MCF 10A (cell line): ENCODE measurements at regions of chr4 and their contacts with region 1.

Region 1: GRCh38 chr4:125314676-125315575 is at the start of gene FAT4:
- DNase-seq: peak; percentile 95
- H3K4me3 Mint-ChIP-seq: peak within 1 kb of the TSS; percentile 99
- H3K27ac Mint-ChIP-seq: peak within 1 kb of the TSS; percentile 63
- H3K4me1 Mint-ChIP-seq: peaks cover 18% of the 10 kb centered on the region
- H3K27me3 Mint-ChIP-seq: no peaks in the 10 kb centered on the region
- CTCF ChIP-seq: no peak
- total RNA-seq, gene FAT4: 6.4 and 6.6 TPM in 2 replicates

Region 2: DNA sequence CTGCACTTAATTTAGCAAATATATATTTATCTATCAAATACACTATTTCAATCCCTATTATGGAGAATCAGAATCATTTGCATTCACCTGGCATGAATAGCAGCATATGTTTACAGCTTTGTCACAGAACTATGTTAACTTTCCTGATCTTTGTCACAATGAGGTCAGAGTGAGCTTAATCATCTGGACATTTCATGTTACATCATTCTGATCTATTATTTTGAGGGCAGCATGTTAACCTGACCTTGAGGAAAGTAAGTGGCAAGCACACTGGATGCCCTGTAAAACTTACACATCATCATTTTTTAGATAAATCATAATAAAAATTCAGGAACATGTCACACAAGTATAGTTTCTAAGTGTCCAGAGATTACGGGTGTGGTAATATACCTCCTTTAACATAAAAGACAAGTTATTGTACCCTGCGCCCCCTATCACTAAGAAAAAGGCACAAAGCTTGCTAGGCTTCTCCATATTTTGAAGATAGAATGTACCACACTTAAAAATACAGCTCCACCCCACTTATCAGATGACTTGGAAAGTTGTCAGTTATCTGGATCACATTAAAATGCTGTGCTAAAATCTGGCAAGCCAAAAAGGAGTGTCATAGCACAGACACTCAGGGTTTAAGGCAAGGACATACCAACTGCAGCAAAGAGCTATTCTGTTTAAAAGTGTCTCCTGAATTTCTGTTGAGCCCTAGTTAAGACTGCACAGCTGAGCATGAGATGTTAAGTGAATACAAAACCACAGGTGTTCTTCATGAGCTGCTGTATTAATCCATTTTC is 182.8 kb before region 1 on chr4:
- CTCF ChIA-PET with region 1: no interaction called
- POLR2A ChIA-PET with region 1: no interaction called
- intact Hi-C with region 1: no loop called
- DNase-seq: no peak
- H3K4me3 Mint-ChIP-seq: no peak overlapping the region
- H3K27ac Mint-ChIP-seq: no peak overlapping the region
- H3K4me1 Mint-ChIP-seq: no peaks in the 10 kb centered on the region
- H3K27me3 Mint-ChIP-seq: no peaks in the 10 kb centered on the region
- CTCF ChIP-seq: no peak

Region 3: DNA sequence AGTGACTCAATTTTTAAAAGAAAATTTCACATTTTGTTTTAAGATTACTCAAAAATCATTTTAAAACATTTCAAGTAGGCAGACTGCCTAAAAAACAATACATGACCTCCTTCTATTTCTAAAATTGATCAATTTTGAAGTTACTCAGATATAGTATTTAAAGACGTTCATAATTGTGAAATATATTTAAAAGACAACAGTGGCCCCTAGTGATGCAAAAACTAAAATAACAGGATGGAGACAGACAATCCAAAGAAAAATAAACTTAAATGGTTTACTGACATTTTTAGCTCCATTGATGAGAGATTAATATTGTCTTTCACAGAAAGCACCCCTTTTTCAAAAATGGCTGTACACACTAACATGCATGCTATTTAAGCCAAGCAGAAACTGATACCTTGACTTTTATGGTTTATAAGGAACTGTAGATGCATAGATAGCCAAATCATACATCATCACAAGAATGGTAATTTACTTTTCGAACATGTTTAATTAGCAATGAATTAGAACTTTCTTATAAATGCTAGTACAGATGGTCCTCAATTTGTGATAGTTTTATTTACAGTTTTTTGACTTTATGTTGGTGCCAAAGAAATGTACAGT is 70.0 kb before region 1 on chr4:
- CTCF ChIA-PET with region 1: no interaction called
- POLR2A ChIA-PET with region 1: no interaction called
- intact Hi-C with region 1: no loop called
- DNase-seq: peak; percentile 27
- H3K4me3 Mint-ChIP-seq: no peak overlapping the region
- H3K27ac Mint-ChIP-seq: no peak overlapping the region
- H3K4me1 Mint-ChIP-seq: peaks cover 5% of the 10 kb centered on the region
- H3K27me3 Mint-ChIP-seq: no peaks in the 10 kb centered on the region
- CTCF ChIP-seq: peak; percentile 44

Region 4: DNA sequence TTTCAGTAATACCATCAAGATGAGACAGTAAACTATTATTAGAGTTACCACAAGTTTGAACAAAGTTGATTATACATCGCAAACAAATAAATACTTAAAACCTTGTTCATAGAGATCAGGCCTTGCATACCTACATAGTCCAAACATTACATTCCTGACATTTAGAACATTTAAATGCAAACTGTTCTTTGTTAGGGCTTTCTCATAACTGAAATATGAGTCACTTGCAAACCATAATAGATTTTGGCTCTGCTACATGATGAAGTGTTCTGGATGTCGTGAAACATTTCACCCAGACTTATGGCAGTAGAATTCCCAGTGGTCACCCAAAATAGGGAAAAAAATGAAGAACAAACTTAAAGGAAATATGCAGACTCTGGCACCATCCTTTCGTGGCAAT is 74.8 kb after region 1 on chr4:
- CTCF ChIA-PET with region 1: interaction called, 7 read pairs
- POLR2A ChIA-PET with region 1: interaction called, 24 read pairs
- intact Hi-C with region 1: loop called (anchors 1 kb)
- DNase-seq: peak; percentile 76
- H3K4me3 Mint-ChIP-seq: peak overlapping the region; percentile 60
- H3K27ac Mint-ChIP-seq: peak overlapping the region; percentile 87
- H3K4me1 Mint-ChIP-seq: peaks cover 33% of the 10 kb centered on the region
- H3K27me3 Mint-ChIP-seq: no peaks in the 10 kb centered on the region
- CTCF ChIP-seq: no peak

Region 5: GRCh38 chr4:125728568-125728967 is 413.6 kb after region 1 on chr4:
- CTCF ChIA-PET with region 1: interaction called, 24 read pairs
- POLR2A ChIA-PET with region 1: interaction called, 41 read pairs
- intact Hi-C with region 1: no loop called
- DNase-seq: peak; percentile 90
- H3K4me3 Mint-ChIP-seq: no peak overlapping the region
- H3K27ac Mint-ChIP-seq: peak overlapping the region; percentile 93
- H3K4me1 Mint-ChIP-seq: peaks cover 38% of the 10 kb centered on the region
- H3K27me3 Mint-ChIP-seq: no peaks in the 10 kb centered on the region
- CTCF ChIP-seq: no peak

Region 6: GRCh38 chr4:125741825-125742452 is 427.0 kb after region 1 on chr4:
- CTCF ChIA-PET with region 1: interaction called, 39 read pairs
- POLR2A ChIA-PET with region 1: interaction called, 41 read pairs
- intact Hi-C with region 1: loop called (anchors 1 kb)
- DNase-seq: peak; percentile 50
- H3K4me3 Mint-ChIP-seq: no peak overlapping the region
- H3K27ac Mint-ChIP-seq: no peak overlapping the region
- H3K4me1 Mint-ChIP-seq: peaks cover 7% of the 10 kb centered on the region
- H3K27me3 Mint-ChIP-seq: no peaks in the 10 kb centered on the region
- CTCF ChIP-seq: peak; percentile 62

Region 7: DNA sequence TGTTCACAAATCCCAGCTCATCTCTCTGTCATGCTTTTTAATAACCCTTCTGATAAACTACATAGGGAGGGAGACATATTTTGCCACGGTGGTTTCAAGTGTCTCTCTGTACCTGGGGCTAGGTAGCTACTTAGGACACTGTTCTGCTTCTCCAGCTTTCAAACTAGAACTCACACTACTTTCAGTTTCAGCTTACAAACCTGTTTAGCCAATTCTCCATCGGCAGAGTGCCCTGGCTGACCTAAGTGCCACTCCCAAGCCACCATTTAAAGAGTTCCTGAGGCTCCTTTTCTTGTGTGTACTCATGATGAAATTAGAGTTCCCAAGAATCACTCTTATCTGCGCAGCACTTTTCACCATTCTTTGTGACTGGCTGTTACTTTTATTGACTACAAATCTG is 899.1 kb after region 1 on chr4:
- CTCF ChIA-PET with region 1: interaction called, 3 read pairs
- POLR2A ChIA-PET with region 1: no interaction called
- intact Hi-C with region 1: loop called (anchors 10 kb)
- DNase-seq: peak; percentile 14
- H3K4me3 Mint-ChIP-seq: peak overlapping the region; percentile 28
- H3K27ac Mint-ChIP-seq: no peak overlapping the region
- H3K4me1 Mint-ChIP-seq: peaks cover 8% of the 10 kb centered on the region
- H3K27me3 Mint-ChIP-seq: no peaks in the 10 kb centered on the region
- CTCF ChIP-seq: no peak

Region 8: DNA sequence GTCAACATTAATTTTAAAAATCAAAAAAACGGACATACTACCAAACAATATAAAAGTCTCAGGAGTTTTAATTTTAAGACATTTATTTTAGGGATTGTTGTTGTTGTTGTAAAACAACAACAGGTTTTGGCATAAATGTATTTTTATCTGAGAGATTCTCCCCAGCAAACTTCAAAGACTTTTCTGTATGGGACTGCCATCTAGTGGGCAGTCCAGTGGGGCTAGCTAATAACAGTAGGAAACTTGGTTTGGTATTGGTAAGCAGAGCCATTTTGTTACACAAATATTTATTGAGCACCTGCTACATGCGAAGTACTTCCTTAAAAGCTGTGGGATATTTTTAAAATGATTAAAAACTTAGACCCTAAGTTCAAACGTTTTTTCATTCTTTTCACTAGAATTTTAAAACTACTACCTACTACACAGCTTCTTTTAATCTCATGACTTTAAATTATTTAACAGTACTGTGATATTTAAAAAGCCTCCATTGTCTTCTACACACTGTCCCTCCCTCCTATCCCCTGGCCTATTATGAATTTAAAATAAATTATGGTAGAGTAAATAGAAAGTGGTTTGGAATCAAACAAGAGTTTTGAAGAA is 1289.4 kb after region 1 on chr4:
- CTCF ChIA-PET with region 1: interaction called, 18 read pairs
- POLR2A ChIA-PET with region 1: interaction called, 3 read pairs
- intact Hi-C with region 1: loop called (anchors 1 kb)
- DNase-seq: peak; percentile 55
- H3K4me3 Mint-ChIP-seq: no peak overlapping the region
- H3K27ac Mint-ChIP-seq: no peak overlapping the region
- H3K4me1 Mint-ChIP-seq: no peaks in the 10 kb centered on the region
- H3K27me3 Mint-ChIP-seq: no peaks in the 10 kb centered on the region
- CTCF ChIP-seq: peak; percentile 61

Region 9: DNA sequence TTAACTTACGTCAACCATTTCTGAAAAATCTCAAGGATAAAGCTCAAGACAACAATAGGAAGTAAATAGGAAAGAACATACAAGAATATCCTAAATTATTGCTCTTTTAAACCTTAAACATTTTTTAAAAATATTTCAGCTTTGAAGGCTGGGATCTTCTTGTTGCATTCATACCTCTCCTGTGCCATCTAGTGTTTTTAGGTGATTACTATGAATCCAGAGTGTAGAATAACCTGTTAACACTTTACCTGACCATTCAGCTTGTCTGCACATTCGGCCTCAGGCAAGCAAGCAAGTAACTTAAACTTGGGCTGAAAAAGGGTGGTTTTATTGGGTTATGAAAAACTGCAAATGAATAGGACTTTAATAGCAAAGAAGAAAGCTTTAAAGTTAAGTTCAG is 1810.0 kb after region 1 on chr4:
- CTCF ChIA-PET with region 1: no interaction called
- POLR2A ChIA-PET with region 1: no interaction called
- intact Hi-C with region 1: loop called (anchors 2 kb)
- DNase-seq: peak; percentile 16
- H3K4me3 Mint-ChIP-seq: no peak overlapping the region
- H3K27ac Mint-ChIP-seq: no peak overlapping the region
- H3K4me1 Mint-ChIP-seq: no peaks in the 10 kb centered on the region
- H3K27me3 Mint-ChIP-seq: no peaks in the 10 kb centered on the region
- CTCF ChIP-seq: peak; percentile 26